ENCODE measurements at regions of chr11 and their contacts with region 1.

Region 1: DNA sequence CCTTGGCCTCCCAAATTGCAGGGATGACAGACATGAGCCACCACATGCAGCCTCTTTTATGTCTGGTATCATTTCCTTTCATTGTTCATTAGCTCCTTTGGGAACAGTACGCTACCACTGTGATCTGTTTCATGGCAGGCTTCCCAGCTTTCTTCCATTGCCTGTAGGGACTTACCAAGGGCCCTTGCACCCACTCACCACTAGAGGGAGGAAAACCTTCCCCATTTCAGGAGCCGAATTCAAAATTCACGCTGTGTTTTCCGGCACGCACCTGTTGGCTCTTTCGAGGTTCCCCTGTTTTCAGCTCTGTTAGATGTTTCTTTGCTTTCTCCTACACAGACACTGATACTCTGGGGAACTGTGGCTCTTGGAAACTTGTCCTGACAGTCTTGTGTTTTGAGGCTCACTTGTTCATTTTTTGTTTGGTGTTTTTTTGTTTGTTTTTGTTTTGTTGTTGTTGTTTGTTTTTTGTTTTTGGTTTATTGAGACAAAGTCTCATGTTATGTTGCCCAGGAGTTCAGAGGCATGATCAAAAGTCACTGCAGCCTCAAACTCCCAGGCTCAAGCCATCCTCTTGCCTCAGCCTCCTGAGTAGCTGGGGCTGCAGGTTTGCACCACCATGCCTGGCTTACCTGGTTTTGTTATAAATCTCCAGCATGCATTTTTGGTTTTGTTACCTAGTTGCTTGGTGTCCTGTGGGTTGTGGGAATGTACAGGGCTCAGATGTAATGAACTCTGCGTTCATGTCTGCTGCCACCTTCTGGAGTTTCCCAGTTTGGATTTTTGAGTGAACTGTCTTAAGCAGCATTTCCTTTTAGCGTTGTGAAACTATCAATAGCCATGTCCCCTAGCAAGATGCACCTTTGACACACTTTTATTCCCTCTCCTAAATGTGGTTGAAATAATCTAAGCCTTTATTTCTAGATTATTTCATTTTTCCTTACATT is 2.3 kb downstream of the KRTAP5-11 start:
- DNase-seq: peak; percentile 84 to 85
- H3K4me3 ChIP-seq: no peak overlapping the region
- H3K4me3 Mint-ChIP-seq: peak overlapping the region; percentile 33
- H3K27ac Mint-ChIP-seq: no peak overlapping the region
- H3K4me1 ChIP-seq: peaks cover 19% of the 10 kb centered on the region
- H3K4me1 Mint-ChIP-seq: peaks cover 7% of the 10 kb centered on the region
- H3K27me3 ChIP-seq: no peaks in the 10 kb centered on the region
- H3K27me3 Mint-ChIP-seq: peaks cover 2% of the 10 kb centered on the region
- CTCF ChIP-seq: peak; percentile 92 to 97

Region 2: GRCh38 chr11:71489311-71490048 is 90.8 kb before region 1 on chr11:
- CTCF ChIA-PET with region 1: interaction called, 6 read pairs
- POLR2A ChIA-PET with region 1: no interaction called
- intact Hi-C with region 1: loop called (anchors 2 kb)
- DNase-seq: peak in 1 of 2 experiments; percentile 34
- H3K4me3 ChIP-seq: no peak overlapping the region
- H3K4me3 Mint-ChIP-seq: no peak overlapping the region
- H3K27ac Mint-ChIP-seq: peak overlapping the region; percentile 40
- H3K4me1 ChIP-seq: peaks cover 23% of the 10 kb centered on the region
- H3K4me1 Mint-ChIP-seq: peaks cover 21% of the 10 kb centered on the region
- H3K27me3 ChIP-seq: no peaks in the 10 kb centered on the region
- H3K27me3 Mint-ChIP-seq: no peaks in the 10 kb centered on the region
- CTCF ChIP-seq: no peak